ENCODE measurements at regions of chr18 and their contacts with region 1.

Region 1: DNA sequence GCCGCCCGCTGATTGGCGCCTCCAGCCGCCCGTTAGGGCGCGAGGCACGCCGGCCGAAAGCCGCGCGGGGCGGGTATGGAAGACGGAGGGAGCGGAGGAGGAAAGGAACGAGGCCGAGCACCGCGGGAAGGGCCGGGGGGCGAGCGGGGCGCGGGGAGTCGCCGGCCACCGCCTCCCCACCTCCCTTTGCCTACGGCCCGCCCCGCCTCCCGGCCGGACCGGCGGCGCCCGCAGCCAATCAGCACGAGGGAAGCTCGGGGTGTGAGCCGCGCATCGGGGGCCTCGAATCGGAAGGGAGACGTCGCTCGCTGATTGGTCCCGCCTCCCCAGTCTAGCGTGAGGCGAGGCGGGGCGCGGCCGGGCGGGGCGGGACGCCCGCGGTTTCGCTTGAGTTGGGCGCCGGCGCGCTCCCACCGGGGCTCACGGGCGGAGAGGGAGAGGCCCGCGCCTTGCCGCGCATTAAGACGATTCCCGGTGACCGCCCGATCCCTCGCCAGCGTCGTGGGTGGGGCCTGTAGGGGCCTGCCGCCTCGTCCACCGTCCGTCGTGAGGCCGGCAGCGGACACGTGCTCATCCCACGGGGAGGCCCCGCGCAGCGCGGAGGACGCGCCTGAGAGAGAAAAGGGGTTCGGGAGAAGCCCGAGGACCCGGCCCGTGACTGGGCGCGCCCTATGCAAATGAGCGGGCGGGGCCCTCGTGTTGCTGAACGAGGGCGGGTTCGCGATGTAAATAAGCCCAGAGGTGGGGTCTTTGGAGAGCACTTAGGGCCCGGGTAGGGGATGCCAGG is 665 bp upstream of the SMAD2 start:
- DNase-seq: peak; percentile 96
- H3K4me3 Mint-ChIP-seq: peak overlapping the region; percentile 83
- H3K27ac Mint-ChIP-seq: peak overlapping the region; percentile 92
- H3K4me1 Mint-ChIP-seq: peaks cover 44% of the 10 kb centered on the region
- H3K27me3 Mint-ChIP-seq: peaks cover 2% of the 10 kb centered on the region

Region 2: DNA sequence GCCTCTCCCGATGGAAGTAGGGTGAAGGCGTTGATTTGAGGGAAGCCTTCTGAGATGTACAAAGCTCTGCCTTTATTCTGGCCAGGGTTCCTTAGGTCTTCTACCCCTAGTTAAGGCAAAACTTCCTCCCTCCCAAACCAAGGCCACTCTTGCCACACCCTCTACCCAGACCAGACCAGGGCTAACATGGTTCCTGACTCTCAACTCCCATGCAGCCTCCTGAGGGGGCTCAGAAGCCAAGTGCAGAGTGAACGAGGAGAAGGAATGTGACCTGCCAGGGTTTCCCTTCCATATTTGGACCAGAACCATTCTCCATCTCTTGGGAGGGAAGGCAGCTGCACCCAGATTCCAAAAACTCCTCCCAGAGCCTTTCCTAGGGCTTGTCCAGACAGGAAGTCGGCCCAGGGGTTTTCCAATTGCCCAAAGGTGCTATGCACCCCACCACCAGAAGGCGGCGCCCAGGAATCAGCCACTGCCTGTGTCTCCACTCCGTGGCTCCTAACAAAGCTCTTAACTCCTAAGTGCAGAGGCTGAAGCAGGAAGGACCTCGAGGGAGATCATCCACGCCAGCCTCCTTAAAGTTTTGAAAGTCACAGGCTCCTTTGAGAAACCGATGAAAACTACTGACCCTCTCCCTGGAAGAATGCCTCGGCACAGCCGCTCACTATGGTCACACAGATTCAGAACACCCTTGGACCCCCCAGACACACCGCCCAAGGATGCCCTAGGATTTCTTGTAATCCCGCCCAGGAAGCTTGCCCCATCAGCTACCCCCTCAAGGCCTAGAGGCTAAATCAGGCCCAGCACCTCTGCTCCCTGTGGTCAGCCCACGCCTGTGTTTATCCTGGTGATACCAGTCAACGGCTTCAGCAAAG is 158.5 kb before region 1 on chr18:
- intact Hi-C with region 1: loop called (anchors 10 kb)
- DNase-seq: peak; percentile 37
- H3K4me3 Mint-ChIP-seq: no peak overlapping the region
- H3K27ac Mint-ChIP-seq: no peak overlapping the region
- H3K4me1 Mint-ChIP-seq: peaks cover 8% of the 10 kb centered on the region
- H3K27me3 Mint-ChIP-seq: peaks cover 4% of the 10 kb centered on the region

Region 3: GRCh38 chr18:47901624-47902362 is 29.3 kb before region 1 on chr18:
- intact Hi-C with region 1: loop called (anchors 1 kb)
- DNase-seq: no peak
- H3K4me3 Mint-ChIP-seq: peak overlapping the region; percentile 64
- H3K27ac Mint-ChIP-seq: peak overlapping the region; percentile 87
- H3K4me1 Mint-ChIP-seq: peaks cover 85% of the 10 kb centered on the region
- H3K27me3 Mint-ChIP-seq: no peaks in the 10 kb centered on the region

Region 4: GRCh38 chr18:47944972-47945843 is 14.1 kb after region 1 on chr18:
- intact Hi-C with region 1: loop called (anchors 2 kb)
- DNase-seq: no peak
- H3K4me3 Mint-ChIP-seq: no peak overlapping the region
- H3K27ac Mint-ChIP-seq: no peak overlapping the region
- H3K4me1 Mint-ChIP-seq: peaks cover 15% of the 10 kb centered on the region
- H3K27me3 Mint-ChIP-seq: peaks cover 3% of the 10 kb centered on the region

Region 5: DNA sequence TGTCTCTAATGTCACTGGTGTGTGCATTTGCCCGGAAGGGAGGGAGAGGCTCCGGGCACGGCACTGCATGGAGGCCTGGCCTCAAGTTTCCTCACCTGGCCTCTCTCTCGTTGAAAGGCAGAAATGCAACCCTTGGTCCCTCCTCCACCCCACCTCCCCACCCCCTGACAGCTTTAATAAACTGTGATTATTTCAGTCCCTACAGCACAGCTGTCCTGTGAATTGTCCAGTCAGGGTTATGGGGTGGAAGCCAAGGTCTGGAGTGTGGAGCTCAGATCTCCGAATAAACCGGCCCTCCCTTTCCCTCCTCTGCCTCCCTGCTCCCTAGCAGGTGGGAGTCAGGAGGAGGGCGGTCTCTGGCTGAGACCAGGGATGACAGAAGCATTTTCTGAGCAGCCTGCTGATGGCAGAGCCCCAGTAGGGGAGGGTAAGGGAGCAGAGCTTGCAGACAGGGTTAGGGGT is 198.5 kb after region 1 on chr18:
- intact Hi-C with region 1: loop called (anchors 10 kb)
- DNase-seq: no peak
- H3K4me3 Mint-ChIP-seq: no peak overlapping the region
- H3K27ac Mint-ChIP-seq: no peak overlapping the region
- H3K4me1 Mint-ChIP-seq: peaks cover 25% of the 10 kb centered on the region
- H3K27me3 Mint-ChIP-seq: peaks cover 76% of the 10 kb centered on the region

Region 6: GRCh38 chr18:49486953-49487710 is 1556.0 kb after region 1 on chr18 and contains the start of gene C18orf32:
- intact Hi-C with region 1: loop called (anchors 2 kb)
- DNase-seq: peak; percentile 91
- H3K4me3 Mint-ChIP-seq: peak within 1 kb of the TSS; percentile 98
- H3K27ac Mint-ChIP-seq: peak within 1 kb of the TSS; percentile 98
- H3K4me1 Mint-ChIP-seq: peaks cover 44% of the 10 kb centered on the region
- H3K27me3 Mint-ChIP-seq: no peaks in the 10 kb centered on the region
- total RNA-seq, gene C18orf32: 21.7 and 22.6 TPM in 2 replicates

Measured in activated T-helper 2 cell treated with anti-CD3 and anti-CD28 coated beads, Interferon-gamma antibody, Interleukin-2, Interleukin-4, amounts not matched to agents 10 μg/mL and 5 μg/mL and 100 μg/mL, durations not matched to agents 14 hours and 24 hours and 36 hours (primary cell).